Naive thymus-derived CD4-positive, alpha-beta T cell (primary cell): ENCODE measurements at regions of chr7 and their contacts with region 1.

Region 1: DNA sequence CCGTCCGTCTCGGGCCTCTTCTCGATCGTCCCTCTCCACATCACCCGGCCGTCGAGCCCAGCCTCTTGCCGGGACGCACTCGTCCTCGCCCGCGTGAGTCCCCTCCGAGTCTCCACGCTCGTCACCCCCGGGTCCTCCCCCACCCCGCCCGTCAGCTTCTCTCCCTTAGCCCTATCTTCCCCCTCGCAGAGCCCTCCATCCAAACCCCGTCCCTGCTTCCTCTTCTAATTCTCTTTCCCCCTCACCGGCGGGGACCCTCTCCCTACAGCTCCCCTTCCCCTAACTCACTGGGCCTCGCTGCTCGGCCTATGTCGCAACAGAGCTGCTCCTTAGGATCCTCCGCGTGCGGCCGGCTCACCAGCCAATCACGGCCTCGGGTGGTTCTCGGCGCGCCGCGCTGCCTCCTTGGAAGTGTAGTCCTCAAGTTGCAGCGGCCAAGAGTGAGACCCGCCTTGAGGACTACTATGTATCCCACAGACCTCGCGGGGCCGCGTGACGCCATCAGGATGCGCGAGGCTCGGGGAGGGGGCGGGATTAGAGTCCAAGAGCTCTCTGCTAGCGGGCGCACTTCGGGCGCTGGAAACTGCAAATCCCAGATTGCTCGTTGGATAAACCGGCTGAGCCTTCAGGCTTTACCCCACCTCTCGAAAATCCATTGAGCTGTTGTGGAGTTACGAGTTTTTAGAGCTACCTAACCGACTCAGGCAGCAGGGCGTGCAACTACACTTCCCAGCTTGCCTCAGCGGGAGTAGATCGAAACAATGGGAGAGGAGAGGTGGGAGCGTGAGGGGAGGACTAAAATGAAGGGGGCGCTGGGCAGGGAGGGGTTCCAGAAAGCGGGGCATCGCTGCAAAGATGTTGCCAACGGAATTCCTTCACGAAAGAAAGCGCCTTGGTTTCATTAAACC is at the start of gene ABCF2:
- DNase-seq: peak; percentile 91 to 98 (median 97)
- ATAC-seq: peak; percentile 99
- H3K4me3 ChIP-seq: peak within 1 kb of the TSS; percentile 91
- H3K4me3 Mint-ChIP-seq: peak within 1 kb of the TSS; percentile 90 to 99 (median 97)
- H3K27ac ChIP-seq: peak within 1 kb of the TSS; percentile 84
- H3K27ac Mint-ChIP-seq: peak within 1 kb of the TSS; percentile 68 to 97 (median 95)
- H3K4me1 ChIP-seq: peaks cover 16 to 25% of the 10 kb centered on the region in 2 donors
- H3K4me1 Mint-ChIP-seq: peaks cover 31 to 55% (median 47%) of the 10 kb centered on the region in 7 donors
- H3K27me3 ChIP-seq: no peaks in the 10 kb centered on the region
- H3K27me3 Mint-ChIP-seq: peaks cover 0 to 6% (median 0%) of the 10 kb centered on the region in 5 donors
- total RNA-seq, gene ABCF2: 17.2 to 37.8 (median 27.7) TPM

Region 2: GRCh38 chr7:149261829-149262617 is 1965.1 kb before region 1 on chr7 and contains the start of gene ZNF783:
- CTCF ChIA-PET with region 1: no interaction called
- POLR2A ChIA-PET with region 1: no interaction called
- intact Hi-C with region 1: loop called in 1 of 2 experiments (anchors 10 kb)
- DNase-seq: peak; percentile 77 to 88 (median 86)
- ATAC-seq: peak; percentile 97
- H3K4me3 ChIP-seq: peak within 1 kb of the TSS; percentile 74
- H3K4me3 Mint-ChIP-seq: peak within 1 kb of the TSS; percentile 83 to 91 (median 88)
- H3K27ac ChIP-seq: peak within 1 kb of the TSS; percentile 71
- H3K27ac Mint-ChIP-seq: peak within 1 kb of the TSS; percentile 84 to 93 (median 90)
- H3K4me1 ChIP-seq: peaks cover 19 to 20% of the 10 kb centered on the region in 2 donors
- H3K4me1 Mint-ChIP-seq: peaks cover 22 to 46% (median 32%) of the 10 kb centered on the region in 7 donors
- H3K27me3 ChIP-seq: no peaks in the 10 kb centered on the region
- H3K27me3 Mint-ChIP-seq: no peaks in the 10 kb centered on the region
- total RNA-seq, gene ZNF783: 23.3 to 49.2 (median 36.0) TPM

Region 3: DNA sequence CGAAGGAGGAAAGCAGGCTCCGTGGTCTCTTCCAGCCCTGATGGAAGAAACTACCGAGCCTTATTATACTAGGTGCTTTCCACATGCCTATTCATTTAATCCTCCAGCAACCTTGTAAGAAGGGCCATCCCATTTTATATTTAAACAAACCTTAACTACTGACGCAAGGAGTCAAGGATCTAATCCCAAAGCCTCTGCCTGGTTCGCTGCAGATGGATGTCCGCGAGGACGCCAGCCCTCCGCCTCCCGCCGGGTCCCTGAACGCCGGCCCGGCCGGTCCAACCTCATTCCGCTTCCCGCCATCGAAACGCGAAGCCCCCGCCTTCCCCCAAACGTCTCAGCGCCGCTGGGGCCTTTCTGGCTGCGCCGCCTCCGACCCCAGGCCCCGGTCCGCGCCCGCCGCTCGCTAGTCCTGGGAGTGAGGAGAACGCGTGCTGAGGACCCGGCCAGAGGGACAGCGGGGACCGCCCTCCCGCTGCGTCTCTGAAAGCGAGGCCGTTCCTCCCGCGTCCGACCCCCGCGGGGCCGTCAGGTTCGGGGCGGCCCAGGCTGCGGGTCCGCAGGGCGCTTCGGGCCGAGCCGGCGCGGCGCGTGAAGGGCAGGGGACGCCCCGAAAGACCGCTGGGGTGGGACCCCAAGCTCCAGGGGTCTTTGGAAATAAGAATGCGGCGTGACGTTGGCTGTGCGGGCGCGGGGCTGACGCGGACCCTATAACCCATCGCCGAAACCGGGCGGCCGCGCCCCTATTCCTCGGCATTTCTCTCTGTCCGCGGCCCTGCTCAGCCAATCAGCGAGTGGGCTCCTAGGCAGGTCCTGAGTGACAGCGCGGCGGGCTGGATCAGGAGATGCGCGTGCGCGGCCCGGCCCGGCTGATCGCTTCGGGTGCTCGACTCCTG is 1353.8 kb before region 1 on chr7 and contains the start of gene ATP6V0E2:
- CTCF ChIA-PET with region 1: no interaction called
- POLR2A ChIA-PET with region 1: no interaction called
- intact Hi-C with region 1: loop called in 1 of 2 experiments (anchors 2 kb)
- DNase-seq: peak; percentile 81 to 92 (median 85)
- ATAC-seq: peak; percentile 84
- H3K4me3 ChIP-seq: peak within 1 kb of the TSS; percentile 76
- H3K4me3 Mint-ChIP-seq: peak within 1 kb of the TSS; percentile 79 to 95 (median 91)
- H3K27ac ChIP-seq: peak within 1 kb of the TSS; percentile 88
- H3K27ac Mint-ChIP-seq: peak within 1 kb of the TSS; percentile 48 to 98 (median 92)
- H3K4me1 ChIP-seq: peaks cover 56% of the 10 kb centered on the region in 2 donors
- H3K4me1 Mint-ChIP-seq: peaks cover 45 to 89% (median 81%) of the 10 kb centered on the region in 7 donors
- H3K27me3 ChIP-seq: no peaks in the 10 kb centered on the region
- H3K27me3 Mint-ChIP-seq: no peaks in the 10 kb centered on the region
- total RNA-seq, gene ATP6V0E2: 32.7 to 84.0 (median 55.4) TPM

Region 4: DNA sequence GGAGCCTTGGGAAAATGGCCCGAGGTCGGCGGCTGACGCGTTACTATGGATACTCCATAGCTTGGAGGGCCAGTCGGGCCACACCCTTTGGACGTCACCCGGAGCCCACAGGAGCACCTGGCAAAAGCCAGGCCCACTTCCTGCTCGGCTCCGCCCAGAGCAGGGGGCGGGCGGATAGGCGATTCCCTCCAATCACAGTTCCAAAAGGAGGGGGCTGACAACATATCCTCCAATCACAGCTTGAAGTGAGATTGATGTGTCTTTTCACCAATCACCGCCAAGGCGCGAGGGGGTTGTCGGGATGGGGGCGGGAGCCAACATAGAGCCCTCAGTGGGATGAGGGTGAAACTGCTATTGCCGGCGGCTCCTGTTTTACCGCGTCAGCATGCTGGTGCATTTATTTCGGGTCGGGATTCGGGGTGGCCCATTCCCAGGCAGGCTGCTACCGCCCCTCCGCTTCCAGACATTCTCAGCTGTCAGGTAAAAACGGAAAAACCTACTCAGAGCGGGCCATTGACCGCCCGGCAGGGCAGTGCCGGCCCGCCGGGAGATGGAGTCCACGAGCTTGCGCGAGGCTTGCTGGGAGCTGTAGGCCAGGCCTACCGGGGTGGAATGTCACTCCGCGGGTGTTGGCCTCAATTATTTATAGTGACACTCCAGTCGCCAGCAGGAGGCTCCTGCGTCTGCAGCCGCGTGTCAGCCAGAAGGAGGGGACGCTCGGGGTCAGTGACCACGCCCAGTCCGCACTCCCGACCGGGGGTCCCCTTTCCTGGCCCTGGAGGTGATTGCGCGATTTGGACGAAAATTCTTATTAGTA is 198.8 kb before region 1 on chr7 and contains the start of gene ABCB8:
- CTCF ChIA-PET with region 1: no interaction called
- POLR2A ChIA-PET with region 1: no interaction called
- intact Hi-C with region 1: loop called (anchors 1 kb)
- DNase-seq: peak; percentile 89 to 100 (median 99)
- ATAC-seq: peak; percentile 94
- H3K4me3 ChIP-seq: peak within 1 kb of the TSS; percentile 78
- H3K4me3 Mint-ChIP-seq: peak within 1 kb of the TSS; percentile 83 to 98 (median 92)
- H3K27ac ChIP-seq: peak within 1 kb of the TSS; percentile 94
- H3K27ac Mint-ChIP-seq: peak within 1 kb of the TSS; percentile 95 to 100 (median 99)
- H3K4me1 ChIP-seq: peaks cover 6% of the 10 kb centered on the region in 2 donors
- H3K4me1 Mint-ChIP-seq: peaks cover 20 to 40% (median 29%) of the 10 kb centered on the region in 7 donors
- H3K27me3 ChIP-seq: no peaks in the 10 kb centered on the region
- H3K27me3 Mint-ChIP-seq: peaks cover 0 to 6% (median 0%) of the 10 kb centered on the region in 5 donors
- total RNA-seq, gene ABCB8: 59.7 to 88.0 (median 76.6) TPM

Region 5: DNA sequence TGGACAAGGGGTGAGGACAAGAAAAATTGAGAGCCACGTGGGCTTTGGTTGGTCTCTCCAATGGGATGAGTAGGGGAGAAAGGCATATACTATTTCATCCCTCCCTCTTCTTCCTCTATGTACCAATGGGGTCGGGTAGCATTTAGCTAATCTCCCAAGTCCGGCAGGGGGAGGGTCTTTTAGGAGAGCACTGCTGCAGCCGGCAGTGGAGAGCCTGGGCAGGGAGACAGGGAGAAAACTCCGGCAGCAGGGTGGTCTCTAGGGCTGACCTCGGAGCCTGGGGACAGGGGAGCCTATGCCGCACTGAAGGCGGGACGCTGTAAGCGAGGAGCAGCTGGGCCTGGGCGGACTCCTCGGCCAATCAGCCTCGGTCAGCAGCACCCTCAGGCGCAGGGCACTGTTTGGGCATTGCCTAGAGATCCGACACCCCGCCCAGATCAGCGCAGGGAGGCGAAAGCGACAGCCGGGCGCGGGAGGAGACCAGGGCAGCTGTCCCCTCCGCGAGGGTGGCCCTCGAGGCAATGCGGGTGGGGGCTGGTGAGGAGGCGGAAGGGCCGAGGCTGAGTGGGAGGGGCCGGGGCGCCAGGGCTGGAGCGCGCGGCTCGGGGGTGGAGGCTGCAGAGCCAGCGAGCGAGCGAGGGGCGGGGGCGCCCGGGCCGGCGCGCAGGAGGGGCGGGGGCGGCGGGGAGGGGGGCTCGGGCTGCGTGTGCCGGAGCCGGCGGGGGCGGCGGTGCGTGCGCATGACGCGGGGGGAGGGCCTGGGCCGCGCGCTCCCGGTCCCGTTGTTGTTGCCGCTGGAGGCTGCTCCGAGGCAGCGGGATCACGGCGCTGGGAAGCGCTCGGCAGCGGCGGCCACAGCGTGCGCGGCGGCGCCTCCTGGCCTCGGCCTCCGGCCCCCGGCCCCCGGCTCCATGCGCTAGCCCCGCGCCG is 141.2 kb before region 1 on chr7 and contains the start of gene AGAP3:
- CTCF ChIA-PET with region 1: no interaction called
- POLR2A ChIA-PET with region 1: interaction called, 3 read pairs
- intact Hi-C with region 1: loop called in 1 of 2 experiments (anchors 1 kb)
- DNase-seq: peak; percentile 41 to 75 (median 50)
- ATAC-seq: peak; percentile 23
- H3K4me3 ChIP-seq: peak within 1 kb of the TSS; percentile 68
- H3K4me3 Mint-ChIP-seq: peak within 1 kb of the TSS; percentile 87 to 97 (median 92)
- H3K27ac ChIP-seq: peak within 1 kb of the TSS; percentile 68
- H3K27ac Mint-ChIP-seq: peak within 1 kb of the TSS; percentile 56 to 96 (median 87)
- H3K4me1 ChIP-seq: peaks cover 36 to 41% of the 10 kb centered on the region in 2 donors
- H3K4me1 Mint-ChIP-seq: peaks cover 31 to 55% (median 41%) of the 10 kb centered on the region in 7 donors
- H3K27me3 ChIP-seq: no peaks in the 10 kb centered on the region
- H3K27me3 Mint-ChIP-seq: peaks cover 0 to 14% (median 0%) of the 10 kb centered on the region in 5 donors
- total RNA-seq, gene AGAP3: 27.4 to 70.6 (median 37.2) TPM

Region 6: GRCh38 chr7:151341357-151342101 is 114.4 kb after region 1 on chr7 and contains the start of gene NUB1:
- CTCF ChIA-PET with region 1: no interaction called
- POLR2A ChIA-PET with region 1: interaction called, 7 read pairs
- intact Hi-C with region 1: loop called (anchors 1 kb)
- DNase-seq: peak; percentile 79 to 99 (median 90)
- ATAC-seq: peak; percentile 98
- H3K4me3 ChIP-seq: peak within 1 kb of the TSS; percentile 84
- H3K4me3 Mint-ChIP-seq: peak within 1 kb of the TSS; percentile 84 to 91 (median 87)
- H3K27ac ChIP-seq: peak within 1 kb of the TSS; percentile 88
- H3K27ac Mint-ChIP-seq: peak within 1 kb of the TSS; percentile 83 to 96 (median 90)
- H3K4me1 ChIP-seq: peaks cover 19 to 21% of the 10 kb centered on the region in 2 donors
- H3K4me1 Mint-ChIP-seq: peaks cover 10 to 44% (median 33%) of the 10 kb centered on the region in 7 donors
- H3K27me3 ChIP-seq: no peaks in the 10 kb centered on the region
- H3K27me3 Mint-ChIP-seq: no peaks in the 10 kb centered on the region
- total RNA-seq, gene NUB1: 75.1 to 116 (median 82.0) TPM

Region 7: DNA sequence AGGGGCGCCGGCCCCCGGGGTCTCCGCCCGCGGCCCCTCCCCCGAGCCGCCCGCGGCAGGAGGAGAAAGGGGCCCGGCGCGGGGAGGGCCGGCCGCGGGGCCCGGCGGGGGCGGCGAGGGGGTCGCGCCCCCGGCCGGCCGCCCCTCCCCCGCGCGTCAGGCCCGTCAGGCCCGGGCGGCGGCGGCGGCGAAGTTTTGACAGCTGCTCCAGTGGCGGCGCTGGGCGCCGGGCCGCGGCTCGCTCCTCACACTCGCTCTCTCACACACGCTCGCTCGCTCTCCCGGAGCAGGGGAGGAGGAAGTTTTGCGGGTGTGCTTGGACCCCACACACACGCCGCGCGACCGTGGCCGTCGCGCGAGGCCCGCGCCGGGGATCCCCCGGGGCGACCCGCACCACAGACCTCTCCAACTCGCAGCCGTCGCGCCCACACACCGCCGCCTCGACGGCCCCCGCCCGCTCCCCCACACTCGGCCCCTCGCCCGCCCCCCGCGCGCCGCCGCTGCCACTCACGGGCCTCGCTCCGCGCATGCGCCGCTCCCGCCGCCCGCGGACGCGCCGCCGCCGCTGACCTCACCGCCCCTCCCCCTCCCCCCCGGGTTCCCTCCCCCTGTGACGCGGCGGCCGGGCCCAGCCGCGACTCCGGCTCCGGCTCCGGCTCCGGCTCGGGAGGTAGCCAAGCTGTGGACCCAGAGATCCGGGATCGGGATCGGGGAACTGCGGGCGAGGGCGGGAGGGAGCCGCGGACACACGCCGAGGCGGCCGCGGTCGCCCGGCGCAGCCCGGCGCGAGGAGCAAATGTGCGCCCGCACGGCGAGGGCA is 1209.2 kb after region 1 on chr7:
- CTCF ChIA-PET with region 1: no interaction called
- POLR2A ChIA-PET with region 1: no interaction called
- intact Hi-C with region 1: loop called in 1 of 2 experiments (anchors 5 kb)
- DNase-seq: peak; percentile 79 to 92 (median 87)
- ATAC-seq: peak; percentile 87
- H3K4me3 ChIP-seq: peak overlapping the region; percentile 75
- H3K4me3 Mint-ChIP-seq: peak overlapping the region; percentile 79 to 93 (median 88)
- H3K27ac ChIP-seq: peak overlapping the region; percentile 97
- H3K27ac Mint-ChIP-seq: peak overlapping the region; percentile 85 to 97 (median 93)
- H3K4me1 ChIP-seq: peaks cover 5 to 7% of the 10 kb centered on the region in 2 donors
- H3K4me1 Mint-ChIP-seq: peaks cover 15 to 35% (median 24%) of the 10 kb centered on the region in 7 donors
- H3K27me3 ChIP-seq: no peaks in the 10 kb centered on the region
- H3K27me3 Mint-ChIP-seq: no peaks in the 10 kb centered on the region